Caco-2 (cell line): ENCODE measurements at regions of chr3 and their contacts with region 1.

Region 1: GRCh38 chr3:94716326-94717010 is 653.6 kb downstream of the NSUN3 start:
- DNase-seq: peak in 1 of 2 experiments; percentile 29
- H3K4me3 ChIP-seq: no peak overlapping the region
- H3K4me3 Mint-ChIP-seq: no peak overlapping the region
- H3K27ac Mint-ChIP-seq: no peak overlapping the region
- H3K4me1 ChIP-seq: no peaks in the 10 kb centered on the region
- H3K4me1 Mint-ChIP-seq: no peaks in the 10 kb centered on the region
- H3K27me3 ChIP-seq: no peaks in the 10 kb centered on the region
- H3K27me3 Mint-ChIP-seq: no peaks in the 10 kb centered on the region
- CTCF ChIP-seq: peak; percentile 14 to 43

Region 2: GRCh38 chr3:94234177-94234788 is 482.2 kb before region 1 on chr3:
- CTCF ChIA-PET with region 1: no interaction called
- POLR2A ChIA-PET with region 1: no interaction called
- intact Hi-C with region 1: loop called (anchors 5 kb)
- DNase-seq: peak in 1 of 2 experiments; percentile 51
- H3K4me3 ChIP-seq: no peak overlapping the region
- H3K4me3 Mint-ChIP-seq: no peak overlapping the region
- H3K27ac Mint-ChIP-seq: no peak overlapping the region
- H3K4me1 ChIP-seq: no peaks in the 10 kb centered on the region
- H3K4me1 Mint-ChIP-seq: no peaks in the 10 kb centered on the region
- H3K27me3 ChIP-seq: no peaks in the 10 kb centered on the region
- H3K27me3 Mint-ChIP-seq: no peaks in the 10 kb centered on the region
- CTCF ChIP-seq: peak; percentile 70 to 75

Region 3: DNA sequence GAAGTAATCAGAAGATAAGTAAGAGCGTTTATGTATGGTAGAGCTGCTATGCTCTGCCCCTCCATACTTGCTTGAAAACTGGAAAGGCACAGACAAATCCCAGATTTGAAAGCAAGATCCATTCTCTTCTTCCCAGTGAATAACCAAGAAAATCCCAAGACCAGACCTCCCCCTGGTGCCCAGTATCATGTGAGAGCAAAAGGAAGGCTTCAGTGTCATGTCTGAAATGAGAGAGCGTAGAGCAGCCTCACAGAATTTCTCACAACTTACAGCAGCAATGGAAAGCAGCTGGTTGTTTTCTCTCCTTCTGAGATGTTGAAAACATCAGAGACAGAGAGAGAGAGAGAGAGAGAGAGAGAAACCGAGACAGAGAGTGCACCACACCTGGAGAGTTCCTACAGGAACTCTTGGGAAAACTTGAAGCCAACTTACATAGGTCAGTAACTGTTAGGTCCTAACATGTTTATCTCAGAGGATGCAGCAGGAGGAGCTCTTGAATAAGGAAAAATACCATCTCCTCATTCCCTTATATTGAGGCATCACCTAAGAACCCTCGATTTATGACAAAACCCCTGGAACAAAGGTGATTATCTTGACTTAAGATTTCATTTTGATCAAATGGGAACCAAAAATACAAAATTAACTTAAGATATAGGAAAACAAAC is 380.3 kb before region 1 on chr3:
- CTCF ChIA-PET with region 1: no interaction called
- POLR2A ChIA-PET with region 1: no interaction called
- intact Hi-C with region 1: loop called (anchors 1 kb)
- DNase-seq: peak in 1 of 2 experiments; percentile 52
- H3K4me3 ChIP-seq: no peak overlapping the region
- H3K4me3 Mint-ChIP-seq: peak overlapping the region; percentile 2
- H3K27ac Mint-ChIP-seq: peak overlapping the region; percentile 15
- H3K4me1 ChIP-seq: peaks cover 7% of the 10 kb centered on the region; the same call in 1 of the 2 replicates
- H3K4me1 Mint-ChIP-seq: peaks cover 28% of the 10 kb centered on the region
- H3K27me3 ChIP-seq: no peaks in the 10 kb centered on the region
- H3K27me3 Mint-ChIP-seq: no peaks in the 10 kb centered on the region
- CTCF ChIP-seq: peak; percentile 41 to 62

Region 4: DNA sequence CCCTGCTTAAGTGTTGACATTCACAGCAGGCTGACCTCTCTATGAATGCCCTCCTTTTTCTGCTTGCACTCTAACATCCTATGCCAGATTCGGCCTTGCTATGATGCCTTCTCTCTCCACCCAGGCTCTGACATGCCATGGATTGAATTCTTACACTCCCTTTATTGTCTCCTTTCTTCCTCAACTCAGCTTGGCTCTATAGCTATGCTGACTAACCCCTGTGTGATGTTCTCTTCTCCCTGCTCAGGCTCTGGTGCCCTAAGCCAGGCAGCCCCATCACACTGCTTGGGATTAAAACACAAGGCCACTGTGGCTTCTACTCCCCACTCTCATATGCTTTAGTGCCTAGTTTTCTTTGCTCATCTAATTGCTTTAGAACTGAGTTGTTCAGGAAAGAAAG is 89.9 kb before region 1 on chr3:
- CTCF ChIA-PET with region 1: no interaction called
- POLR2A ChIA-PET with region 1: no interaction called
- intact Hi-C with region 1: no loop called
- DNase-seq: no peak
- H3K4me3 ChIP-seq: no peak overlapping the region
- H3K4me3 Mint-ChIP-seq: no peak overlapping the region
- H3K27ac Mint-ChIP-seq: no peak overlapping the region
- H3K4me1 ChIP-seq: no peaks in the 10 kb centered on the region
- H3K4me1 Mint-ChIP-seq: no peaks in the 10 kb centered on the region
- H3K27me3 ChIP-seq: no peaks in the 10 kb centered on the region
- H3K27me3 Mint-ChIP-seq: no peaks in the 10 kb centered on the region
- CTCF ChIP-seq: no peak

Region 5: DNA sequence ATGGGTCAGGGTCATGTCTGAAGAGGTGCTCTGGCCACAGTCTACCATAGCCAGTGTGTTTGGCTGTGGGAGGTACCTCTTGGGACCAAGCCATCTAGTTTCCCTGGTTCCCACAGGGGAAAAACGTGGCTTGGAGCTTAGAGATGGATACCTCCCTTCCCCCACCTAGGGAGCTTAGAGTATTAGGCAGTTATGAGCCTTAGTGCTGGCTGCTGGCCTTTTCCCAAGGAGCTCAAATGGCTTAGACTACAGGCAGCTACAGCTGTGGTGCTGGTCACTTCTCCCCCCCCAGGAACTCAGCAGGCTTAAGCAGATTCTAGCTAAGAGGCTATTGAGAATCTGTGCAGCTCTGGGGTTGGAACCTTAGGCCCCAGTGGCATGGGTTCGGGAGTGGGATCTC is 62.4 kb before region 1 on chr3:
- CTCF ChIA-PET with region 1: no interaction called
- POLR2A ChIA-PET with region 1: no interaction called
- intact Hi-C with region 1: loop called (anchors 10 kb)
- DNase-seq: no peak
- H3K4me3 ChIP-seq: no peak overlapping the region
- H3K4me3 Mint-ChIP-seq: no peak overlapping the region
- H3K27ac Mint-ChIP-seq: no peak overlapping the region
- H3K4me1 ChIP-seq: peaks cover 30% of the 10 kb centered on the region
- H3K4me1 Mint-ChIP-seq: peaks cover 36% of the 10 kb centered on the region
- H3K27me3 ChIP-seq: no peaks in the 10 kb centered on the region
- H3K27me3 Mint-ChIP-seq: no peaks in the 10 kb centered on the region
- CTCF ChIP-seq: no peak